ENCODE measurements at regions of chr7 and their contacts with region 1.

Region 1: DNA sequence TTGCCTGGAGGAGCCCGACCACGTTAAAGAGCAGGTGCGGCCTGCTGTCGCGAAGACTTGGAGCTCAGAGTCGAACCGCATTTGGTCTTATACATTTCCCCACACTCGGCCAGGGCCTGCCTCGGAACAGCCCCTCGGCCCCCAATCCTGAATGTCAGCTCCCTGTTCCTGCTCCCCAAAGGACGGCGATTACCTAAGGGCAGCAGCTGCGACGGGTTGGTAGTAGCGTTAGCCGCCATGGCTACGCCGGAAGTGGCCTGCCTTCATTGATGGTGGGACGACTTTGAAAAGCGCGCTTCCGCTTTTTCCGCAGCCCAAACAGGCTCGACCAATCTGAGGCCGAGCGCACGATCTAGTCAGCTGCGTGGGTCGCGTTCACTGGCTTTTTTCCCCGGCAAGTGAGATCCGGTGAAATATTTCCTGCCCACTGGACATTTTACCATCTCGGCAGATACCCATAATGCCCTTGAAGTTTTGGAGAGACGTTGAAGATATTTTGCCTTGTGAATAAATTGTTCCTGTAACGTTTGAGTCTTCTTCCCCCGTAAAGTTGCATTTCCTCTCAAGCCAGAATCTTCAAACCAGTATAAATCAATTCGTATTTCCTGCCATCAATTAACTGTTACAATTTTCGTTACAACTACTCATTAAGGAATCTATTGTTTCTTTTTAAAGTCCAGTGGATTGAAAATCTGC is at the start of gene LSM5:
- DNase-seq: peak; percentile 85
- H3K4me3 Mint-ChIP-seq: peak within 1 kb of the TSS; percentile 89
- H3K27ac Mint-ChIP-seq: peak within 1 kb of the TSS; percentile 91
- H3K4me1 Mint-ChIP-seq: peaks cover 24% of the 10 kb centered on the region
- H3K27me3 Mint-ChIP-seq: no peaks in the 10 kb centered on the region
- total RNA-seq, gene LSM5: 79.6 and 84.3 TPM in 2 replicates

Region 2: GRCh38 chr7:32561613-32562012 is 71.3 kb after region 1 on chr7:
- intact Hi-C with region 1: loop called (anchors 2 kb)
- DNase-seq: no peak
- H3K4me3 Mint-ChIP-seq: no peak overlapping the region
- H3K27ac Mint-ChIP-seq: no peak overlapping the region
- H3K4me1 Mint-ChIP-seq: peaks cover 18% of the 10 kb centered on the region
- H3K27me3 Mint-ChIP-seq: no peaks in the 10 kb centered on the region